CD14-positive monocyte (primary cell): ENCODE measurements at regions of chr6 and their contacts with region 1.

Region 1: DNA sequence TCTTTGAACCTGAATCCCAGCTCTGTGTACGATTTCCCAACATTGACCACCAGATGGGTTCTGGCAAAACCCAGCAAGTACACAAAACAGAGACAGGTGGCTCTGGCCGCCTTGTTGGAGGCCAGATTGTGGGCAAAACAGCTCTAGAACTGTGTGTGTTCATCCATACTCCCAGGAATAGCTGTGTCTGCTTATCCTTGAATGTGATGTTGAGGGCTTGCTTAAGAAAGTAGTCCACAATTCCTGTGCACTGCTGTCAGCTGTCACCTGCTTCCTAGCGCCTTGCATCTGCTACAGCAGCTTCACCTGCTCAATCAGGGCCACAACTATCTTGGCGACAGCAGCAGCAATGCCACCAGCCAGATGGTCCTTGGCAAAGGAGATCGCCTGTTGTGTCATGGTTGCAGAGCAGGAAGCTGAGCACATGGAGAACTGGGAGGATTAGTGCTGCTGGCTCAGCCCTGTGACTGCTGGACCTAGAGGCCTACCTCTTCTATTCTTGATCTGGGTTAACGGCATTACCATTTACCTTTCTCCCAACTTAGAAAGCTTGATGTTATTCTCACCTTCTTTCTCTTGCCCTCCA is 3.7 kb upstream of the SMAP1 start:
- DNase-seq: no peak
- H3K4me3 ChIP-seq: no peak overlapping the region
- H3K4me3 Mint-ChIP-seq: no peak overlapping the region
- H3K27ac ChIP-seq: no peak overlapping the region
- H3K27ac Mint-ChIP-seq: no peak overlapping the region
- H3K4me1 ChIP-seq: peaks cover 20 to 21% of the 10 kb centered on the region in 2 donors
- H3K4me1 Mint-ChIP-seq: peaks cover 20% of the 10 kb centered on the region
- H3K27me3 ChIP-seq: peaks cover 0 to 2% of the 10 kb centered on the region in 2 donors
- H3K27me3 Mint-ChIP-seq: peaks cover 2 to 5% (median 5%) of the 10 kb centered on the region in 3 donors
- CTCF ChIP-seq: no peak

Region 2: DNA sequence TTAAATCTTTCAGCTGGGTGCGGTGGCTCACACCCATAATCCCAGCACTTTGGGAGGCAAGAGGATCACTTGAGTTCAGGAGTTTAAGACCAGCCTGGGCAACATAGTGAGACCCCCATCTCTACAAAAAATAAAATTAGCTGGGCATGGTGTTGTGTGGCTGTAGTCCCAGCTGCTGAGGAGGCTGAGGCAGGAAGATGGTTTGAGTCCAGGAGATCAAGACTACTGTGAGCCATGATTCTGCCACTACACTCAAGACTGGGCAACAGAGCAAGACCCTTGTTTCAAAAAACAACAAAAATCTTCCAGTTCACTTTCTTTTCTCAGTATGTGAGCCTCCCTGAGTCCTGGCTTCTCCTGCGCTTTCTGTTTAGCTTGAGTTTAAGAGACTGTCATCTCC is 89.3 kb before region 1 on chr6:
- intact Hi-C with region 1: loop called in 1 of 2 experiments (anchors 5 kb)
- DNase-seq: no peak
- H3K4me3 ChIP-seq: no peak overlapping the region
- H3K4me3 Mint-ChIP-seq: no peak overlapping the region
- H3K27ac ChIP-seq: no peak overlapping the region
- H3K27ac Mint-ChIP-seq: no peak overlapping the region
- H3K4me1 ChIP-seq: no peaks in the 10 kb centered on the region
- H3K4me1 Mint-ChIP-seq: no peaks in the 10 kb centered on the region
- H3K27me3 ChIP-seq: no peaks in the 10 kb centered on the region
- H3K27me3 Mint-ChIP-seq: peaks cover 0 to 4% (median 0%) of the 10 kb centered on the region in 3 donors
- CTCF ChIP-seq: no peak

Region 3: GRCh38 chr6:70616728-70617260 is 47.2 kb before region 1 on chr6:
- intact Hi-C with region 1: no loop called
- DNase-seq: no peak
- H3K4me3 ChIP-seq: no peak overlapping the region
- H3K4me3 Mint-ChIP-seq: no peak overlapping the region
- H3K27ac ChIP-seq: no peak overlapping the region
- H3K27ac Mint-ChIP-seq: no peak overlapping the region
- H3K4me1 ChIP-seq: no peaks in the 10 kb centered on the region
- H3K4me1 Mint-ChIP-seq: no peaks in the 10 kb centered on the region
- H3K27me3 ChIP-seq: no peaks in the 10 kb centered on the region
- H3K27me3 Mint-ChIP-seq: peaks cover 4 to 5% (median 4%) of the 10 kb centered on the region in 3 donors
- CTCF ChIP-seq: no peak